Body of pancreas (tissue), 4 donors: ENCODE measurements at regions of chr11 and their contacts with region 1.

Region 1: GRCh38 chr11:76207642-76208401 is 1.5 kb upstream of the WNT11 start:
- DNase-seq: peak; percentile 76 to 87 (median 84)
- ATAC-seq: peak; percentile 74
- H3K4me3 ChIP-seq: peak overlapping the region; percentile 40 to 41
- H3K27ac ChIP-seq: peak overlapping the region in 3 of 4 donors; percentile 33 to 85 (median 79)
- H3K4me1 ChIP-seq: peaks cover 46% of the 10 kb centered on the region
- H3K27me3 ChIP-seq: no peaks in the 10 kb centered on the region
- CTCF ChIP-seq: peak; percentile 90 to 98 (median 96)
- POLR2A ChIP-seq: no peak

Region 2: GRCh38 chr11:76318744-76319384 is 111.0 kb after region 1 on chr11:
- intact Hi-C with region 1: loop called (anchors 5 kb)
- DNase-seq: peak; percentile 87 to 92 (median 90)
- ATAC-seq: peak; percentile 68
- H3K4me3 ChIP-seq: no peak overlapping the region
- H3K27ac ChIP-seq: no peak overlapping the region
- H3K4me1 ChIP-seq: peaks cover 19% of the 10 kb centered on the region
- H3K27me3 ChIP-seq: no peaks in the 10 kb centered on the region
- CTCF ChIP-seq: peak; percentile 88 to 97 (median 90)
- POLR2A ChIP-seq: no peak

Region 3: DNA sequence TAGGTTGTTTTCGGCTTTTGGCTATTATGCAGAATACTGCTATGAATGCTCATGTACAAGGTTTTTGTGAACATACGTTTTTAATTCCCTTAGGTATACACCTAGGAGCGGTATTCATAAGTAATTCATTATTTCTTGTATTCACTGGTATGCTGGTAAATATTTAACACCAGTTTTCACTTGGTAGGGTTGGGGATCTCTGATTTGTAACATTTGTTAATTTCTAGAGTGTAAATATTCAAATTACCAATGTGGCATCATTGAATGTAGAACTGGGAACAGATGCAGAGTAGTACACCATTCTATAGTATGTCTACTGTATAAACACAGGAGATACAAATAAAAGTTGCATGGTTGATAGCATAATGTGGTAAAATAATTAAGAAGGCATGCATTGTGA is 189.6 kb after region 1 on chr11:
- intact Hi-C with region 1: no loop called
- DNase-seq: no peak
- ATAC-seq: no peak
- H3K4me3 ChIP-seq: no peak overlapping the region
- H3K27ac ChIP-seq: no peak overlapping the region
- H3K4me1 ChIP-seq: peaks cover 13% of the 10 kb centered on the region
- H3K27me3 ChIP-seq: no peaks in the 10 kb centered on the region
- CTCF ChIP-seq: no peak
- POLR2A ChIP-seq: no peak

Region 4: GRCh38 chr11:76512851-76513653 is 305.2 kb after region 1 on chr11:
- intact Hi-C with region 1: loop called (anchors 10 kb)
- DNase-seq: no peak
- ATAC-seq: no peak
- H3K4me3 ChIP-seq: no peak overlapping the region
- H3K27ac ChIP-seq: no peak overlapping the region
- H3K4me1 ChIP-seq: peaks cover 28% of the 10 kb centered on the region
- H3K27me3 ChIP-seq: no peaks in the 10 kb centered on the region
- CTCF ChIP-seq: peak in 6 of 7 experiments; percentile 28 to 55 (median 54)
- POLR2A ChIP-seq: no peak